PC-9 (cell line): ENCODE measurements at regions of chr18 and their contacts with region 1.

Region 1: GRCh38 chr18:35231052-35231451 is 9.8 kb upstream of the ZNF397 start:
- DNase-seq: peak in 1 of 2 experiments; percentile 55
- H3K4me3 ChIP-seq: peak overlapping the region; percentile 46; the same call in 1 of the 2 replicates
- H3K27ac ChIP-seq: no peak overlapping the region
- H3K4me1 ChIP-seq: 0 out of 2 replicates have a peak, but pooled peaks cover 4% of the 10 kb centered on the region
- H3K27me3 ChIP-seq: no peaks in the 10 kb centered on the region
- CTCF ChIP-seq: peak; percentile 82

Region 2: GRCh38 chr18:35005963-35006577 is 225.0 kb before region 1 on chr18:
- CTCF ChIA-PET with region 1: no interaction called
- POLR2A ChIA-PET with region 1: no interaction called
- intact Hi-C with region 1: loop called (anchors 1 kb)
- DNase-seq: peak; percentile 6 to 32
- H3K4me3 ChIP-seq: no peak overlapping the region
- H3K27ac ChIP-seq: no peak overlapping the region
- H3K4me1 ChIP-seq: no peaks in the 10 kb centered on the region
- H3K27me3 ChIP-seq: no peaks in the 10 kb centered on the region
- CTCF ChIP-seq: peak; percentile 61

Region 3: DNA sequence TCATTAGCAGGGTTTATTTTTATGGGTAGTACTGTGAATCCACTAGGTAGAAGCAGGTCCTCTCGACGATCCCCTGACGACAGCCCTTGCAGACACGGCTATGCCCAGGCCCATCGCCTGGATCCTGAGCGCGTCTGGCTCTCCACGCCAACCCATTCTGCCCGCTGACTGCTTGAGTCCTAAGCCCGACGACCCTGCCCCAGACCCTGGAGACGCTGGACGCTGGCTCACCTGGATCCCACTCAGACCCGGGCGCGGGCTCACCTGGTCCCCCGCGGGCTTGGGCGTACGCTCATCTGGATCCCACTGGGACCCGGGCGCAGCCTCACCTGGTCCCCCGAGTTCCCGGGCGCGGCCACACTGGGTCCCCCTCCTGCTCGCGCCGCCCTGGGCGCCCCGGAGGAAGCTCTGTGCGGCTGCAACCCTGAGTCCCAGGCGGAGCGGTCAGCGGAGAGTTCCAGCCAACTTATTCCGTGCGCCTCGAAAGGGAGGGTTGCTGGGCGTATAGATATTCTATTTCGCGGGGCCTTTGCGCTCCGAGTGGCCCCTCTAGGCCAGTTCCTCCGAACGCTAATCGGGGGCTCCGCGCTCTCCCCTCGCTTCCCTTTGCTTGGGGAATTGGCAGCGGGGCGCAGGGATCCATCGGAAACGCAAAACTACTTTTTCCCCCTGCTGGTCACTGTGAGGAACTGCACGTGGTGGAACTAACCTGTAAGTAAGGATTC is 719.0 kb after region 1 on chr18:
- CTCF ChIA-PET with region 1: no interaction called
- POLR2A ChIA-PET with region 1: no interaction called
- intact Hi-C with region 1: loop called (anchors 5 kb)
- DNase-seq: peak in 1 of 2 experiments; percentile 23
- H3K4me3 ChIP-seq: peak overlapping the region; percentile 51; the same call in 1 of the 2 replicates
- H3K27ac ChIP-seq: no peak overlapping the region
- H3K4me1 ChIP-seq: no peaks in the 10 kb centered on the region
- H3K27me3 ChIP-seq: 0 out of 2 replicates have a peak, but pooled peaks cover 3% of the 10 kb centered on the region
- CTCF ChIP-seq: peak; percentile 87

Region 4: DNA sequence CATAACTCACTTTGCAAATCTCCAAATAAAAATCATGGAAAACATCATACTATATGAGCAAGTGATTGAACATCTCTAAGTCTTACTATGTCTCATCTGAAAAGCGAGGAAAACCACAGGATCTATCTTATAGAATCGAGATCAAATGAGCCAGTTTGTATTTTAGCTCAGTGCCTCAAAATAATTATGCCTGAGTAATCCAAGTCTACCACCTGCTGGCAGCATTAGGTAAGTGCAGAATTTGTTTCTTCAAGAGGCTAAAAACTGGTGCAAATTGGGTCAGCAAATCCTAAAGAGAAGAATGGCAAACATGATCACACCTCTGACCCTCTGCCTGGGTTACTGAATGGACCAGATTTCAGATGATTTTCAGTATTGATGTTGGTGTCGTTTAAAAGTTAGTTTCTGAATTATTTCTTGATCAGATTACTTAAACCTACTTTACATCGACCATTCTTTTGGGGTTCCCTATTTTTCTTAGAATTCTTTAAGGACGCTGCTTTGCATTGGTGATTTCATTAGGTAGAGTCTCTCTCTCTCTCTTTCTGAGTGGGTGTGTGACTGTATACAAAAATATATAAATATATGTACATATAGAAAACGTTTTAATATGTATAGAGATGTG is 1053.7 kb after region 1 on chr18:
- CTCF ChIA-PET with region 1: no interaction called
- POLR2A ChIA-PET with region 1: no interaction called
- intact Hi-C with region 1: loop called (anchors 5 kb)
- DNase-seq: peak; percentile 11 to 41
- H3K4me3 ChIP-seq: no peak overlapping the region
- H3K27ac ChIP-seq: no peak overlapping the region
- H3K4me1 ChIP-seq: no peaks in the 10 kb centered on the region
- H3K27me3 ChIP-seq: no peaks in the 10 kb centered on the region
- CTCF ChIP-seq: peak; percentile 81